ENCODE measurements at regions of chr12 and their contacts with region 1.

Region 1: GRCh38 chr12:52029686-52030085 is 21.6 kb upstream of the NR4A1 start:
- DNase-seq: no peak
- ATAC-seq: no peak

Region 2: GRCh38 chr12:51832354-51833107 is 197.2 kb before region 1 on chr12:
- intact Hi-C with region 1: no loop called
- DNase-seq: no peak
- ATAC-seq: no peak

Region 3: DNA sequence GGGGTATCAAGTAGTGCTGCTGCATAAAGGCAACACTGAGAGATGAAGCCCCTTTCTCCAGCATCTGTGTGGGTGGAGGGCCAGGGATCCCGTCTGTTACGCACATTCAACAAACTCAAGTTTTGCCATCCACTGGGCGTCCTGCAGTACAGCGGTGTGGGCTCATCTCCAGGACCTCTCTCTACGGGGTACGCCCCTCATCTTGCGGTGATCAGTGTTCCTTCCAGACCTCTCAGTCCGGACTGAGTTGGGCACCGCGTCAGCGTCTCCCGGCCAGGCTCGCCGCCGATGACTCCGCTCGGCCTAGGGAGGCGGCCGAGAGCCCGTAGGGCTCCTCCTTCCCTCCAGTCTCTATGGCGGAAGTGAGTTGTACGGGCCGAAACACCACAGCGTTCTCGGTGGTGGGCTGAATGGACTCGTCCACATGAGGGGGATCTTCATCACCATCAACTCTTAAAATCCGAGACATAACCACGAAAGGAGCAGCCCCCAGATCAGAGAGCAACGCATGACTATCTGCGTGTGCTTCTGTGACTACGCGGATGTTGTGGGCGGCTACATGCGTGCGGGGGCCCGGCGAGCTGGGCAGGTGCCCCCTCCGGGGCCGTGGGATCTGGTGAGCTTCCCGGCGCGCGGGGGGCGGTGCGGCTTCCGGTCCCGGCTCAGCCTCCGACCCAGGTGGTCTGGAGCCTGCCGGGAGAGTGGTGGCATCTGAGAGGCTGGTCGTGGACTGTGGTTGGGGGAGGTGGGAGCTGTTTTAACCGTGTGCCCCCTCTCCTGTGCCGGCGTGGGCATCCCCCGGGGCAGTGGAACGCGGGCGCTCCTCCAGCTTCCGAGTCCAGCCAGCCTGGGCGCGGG is 39.9 kb after region 1 on chr12 and contains the start of gene ATG101:
- intact Hi-C with region 1: loop called in 1 of 2 experiments (anchors 5 kb)
- DNase-seq: peak; percentile 93
- ATAC-seq: peak; percentile 98
- total RNA-seq, gene ATG101: 25.2 to 28.7 TPM